Lower leg skin (tissue), 4 donors: ENCODE measurements at regions of chr4 and their contacts with region 1.

Region 1: DNA sequence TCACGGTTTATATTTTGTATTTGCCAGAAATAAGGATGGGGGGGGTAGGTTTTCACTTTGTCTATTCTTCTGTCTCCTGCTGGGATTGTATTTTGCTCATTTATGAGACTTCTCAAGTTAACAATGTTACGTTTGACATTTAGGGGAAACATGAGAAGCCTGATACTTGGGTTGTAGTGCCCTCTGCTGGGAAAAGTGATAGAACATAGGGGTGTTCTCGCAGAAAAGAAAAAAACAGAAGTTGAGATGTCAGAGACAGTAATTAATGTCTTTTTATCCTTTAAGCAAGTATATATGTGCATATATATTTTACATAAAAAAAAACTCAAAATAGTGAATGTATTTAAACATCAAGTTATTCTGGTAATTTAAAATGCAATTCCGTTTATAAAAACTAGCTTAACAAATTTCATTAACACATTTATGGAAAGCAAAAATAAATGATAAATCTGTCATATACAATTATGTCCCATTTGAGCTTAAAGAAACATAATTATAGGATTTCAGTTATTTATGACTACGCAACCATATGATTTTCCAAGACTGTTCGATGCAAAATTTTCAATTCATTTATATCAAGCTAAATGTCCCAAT is 46.0 kb upstream of the TMPRSS11F start:
- DNase-seq: no peak
- H3K4me3 ChIP-seq: no peak overlapping the region
- CTCF ChIP-seq: no peak
- POLR2A ChIP-seq: no peak

Region 2: GRCh38 chr4:66376921-66377320 is 1798.7 kb before region 1 on chr4:
- intact Hi-C with region 1: no loop called
- DNase-seq: no peak
- H3K4me3 ChIP-seq: no peak overlapping the region
- CTCF ChIP-seq: no peak
- POLR2A ChIP-seq: no peak

Region 3: GRCh38 chr4:67996127-67996526 is 179.5 kb before region 1 on chr4:
- intact Hi-C with region 1: loop called (anchors 10 kb)
- DNase-seq: no peak
- H3K4me3 ChIP-seq: no peak overlapping the region
- CTCF ChIP-seq: no peak
- POLR2A ChIP-seq: no peak